Left colon (tissue), 2 donors: ENCODE measurements at regions of chr9 and their contacts with region 1.

Region 1: DNA sequence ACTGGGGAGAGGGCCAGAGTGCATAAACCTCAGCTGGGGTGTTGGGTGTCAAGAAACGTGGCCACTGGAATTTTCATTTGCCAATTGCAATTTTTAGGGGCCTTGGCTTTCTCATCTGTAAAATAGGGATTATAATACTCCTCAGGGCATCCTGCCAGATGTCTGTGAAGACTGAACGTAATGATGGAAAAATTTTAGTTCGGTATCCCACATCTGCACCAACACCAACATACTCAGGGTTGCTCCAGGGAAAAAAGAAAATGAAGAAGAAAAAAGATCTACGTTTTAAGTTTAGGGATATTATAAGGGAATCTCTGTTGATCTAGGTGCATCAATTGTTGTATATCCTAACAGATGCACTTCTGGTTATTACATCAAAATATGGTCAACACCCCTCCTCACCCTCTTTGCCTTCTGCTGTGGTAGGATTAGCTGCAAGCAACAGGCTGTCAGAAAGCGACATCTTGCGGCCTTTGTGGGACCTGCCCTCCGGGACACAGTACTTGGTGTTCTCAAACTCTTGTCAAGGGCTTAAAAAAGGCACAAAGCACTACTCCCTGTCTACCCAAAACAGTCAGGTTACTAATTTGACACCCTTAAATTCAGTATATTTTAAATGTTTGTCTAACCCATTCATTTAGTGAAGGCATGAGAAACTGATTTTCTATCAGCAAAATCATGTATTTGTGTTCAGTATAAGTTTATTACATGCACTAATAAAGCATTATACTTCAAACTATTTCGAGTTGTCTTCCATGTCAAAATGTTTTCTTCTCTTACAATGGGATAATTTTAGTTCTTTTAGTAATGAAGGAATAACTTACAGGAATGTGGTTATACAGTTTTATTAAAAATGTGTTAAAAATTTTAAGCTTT is 8.3 kb upstream of the TBC1D2 start:
- DNase-seq: peak; percentile 71 to 84
- ATAC-seq: peak; percentile 98

Region 2: GRCh38 chr9:97906236-97906831 is 357.4 kb before region 1 on chr9:
- intact Hi-C with region 1: no loop called
- DNase-seq: peak in 1 of 2 donors; percentile 15
- ATAC-seq: peak; percentile 28

Region 3: DNA sequence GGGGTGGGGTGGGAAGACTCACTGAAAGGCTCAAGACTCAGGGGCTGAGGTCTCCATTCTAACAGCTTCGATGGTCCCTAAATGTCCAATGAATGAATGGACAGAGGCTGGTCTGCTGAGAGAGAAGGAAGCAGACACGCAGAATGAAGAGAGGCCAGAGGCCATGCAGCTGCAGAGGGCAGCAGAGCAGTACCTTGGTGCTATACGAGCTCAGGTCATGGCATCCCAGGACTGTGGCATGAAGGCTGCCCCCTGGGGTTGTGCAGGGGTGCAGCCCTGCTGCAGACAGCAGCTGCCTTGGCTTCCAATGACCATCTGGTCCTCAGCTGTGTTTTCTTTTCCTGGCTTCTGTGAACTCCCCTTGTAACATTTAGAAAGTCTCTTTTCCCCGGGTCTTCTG is 56.1 kb before region 1 on chr9:
- intact Hi-C with region 1: loop called (anchors 2 to 10 kb)
- DNase-seq: no peak
- ATAC-seq: no peak

Region 4: GRCh38 chr9:99023831-99024230 is 760.1 kb after region 1 on chr9:
- intact Hi-C with region 1: no loop called
- DNase-seq: no peak
- ATAC-seq: no peak